ENCODE measurements at regions of chr1 and their contacts with region 1.

Region 1: GRCh38 chr1:64163970-64164369 is 39.5 kb upstream of the UBE2U start:
- DNase-seq: no peak

Region 2: DNA sequence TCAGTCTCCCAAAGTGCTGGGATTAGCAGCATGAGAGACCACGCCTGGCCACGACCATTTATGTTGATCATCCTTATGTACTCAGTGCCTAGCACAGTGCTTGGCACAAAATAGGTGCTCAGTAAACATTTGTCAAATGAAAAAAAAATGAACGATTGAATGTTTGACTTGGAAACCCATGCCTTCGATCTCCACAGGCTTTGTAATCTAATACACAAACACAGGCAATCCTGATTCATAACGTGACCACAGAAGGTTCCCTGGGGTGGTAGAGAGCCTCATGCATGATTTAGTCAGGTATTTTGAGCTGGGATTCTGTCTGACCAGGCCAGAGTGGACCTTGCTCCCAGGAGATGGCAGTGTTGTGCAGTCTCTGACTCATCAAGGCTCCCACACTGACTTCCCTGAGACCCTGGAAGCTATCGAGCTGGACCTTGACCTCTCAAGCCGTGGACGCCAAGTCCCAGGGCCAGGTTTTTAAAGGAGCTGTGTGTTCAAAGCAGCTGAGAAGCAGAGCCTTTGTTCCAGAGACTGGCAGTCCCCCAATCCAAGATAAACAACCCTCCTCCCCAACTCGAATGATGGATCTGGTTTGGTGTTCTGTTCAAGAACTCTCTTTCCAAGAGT is 489.6 kb before region 1 on chr1:
- intact Hi-C with region 1: loop called (anchors 10 kb)
- DNase-seq: no peak

Region 3: DNA sequence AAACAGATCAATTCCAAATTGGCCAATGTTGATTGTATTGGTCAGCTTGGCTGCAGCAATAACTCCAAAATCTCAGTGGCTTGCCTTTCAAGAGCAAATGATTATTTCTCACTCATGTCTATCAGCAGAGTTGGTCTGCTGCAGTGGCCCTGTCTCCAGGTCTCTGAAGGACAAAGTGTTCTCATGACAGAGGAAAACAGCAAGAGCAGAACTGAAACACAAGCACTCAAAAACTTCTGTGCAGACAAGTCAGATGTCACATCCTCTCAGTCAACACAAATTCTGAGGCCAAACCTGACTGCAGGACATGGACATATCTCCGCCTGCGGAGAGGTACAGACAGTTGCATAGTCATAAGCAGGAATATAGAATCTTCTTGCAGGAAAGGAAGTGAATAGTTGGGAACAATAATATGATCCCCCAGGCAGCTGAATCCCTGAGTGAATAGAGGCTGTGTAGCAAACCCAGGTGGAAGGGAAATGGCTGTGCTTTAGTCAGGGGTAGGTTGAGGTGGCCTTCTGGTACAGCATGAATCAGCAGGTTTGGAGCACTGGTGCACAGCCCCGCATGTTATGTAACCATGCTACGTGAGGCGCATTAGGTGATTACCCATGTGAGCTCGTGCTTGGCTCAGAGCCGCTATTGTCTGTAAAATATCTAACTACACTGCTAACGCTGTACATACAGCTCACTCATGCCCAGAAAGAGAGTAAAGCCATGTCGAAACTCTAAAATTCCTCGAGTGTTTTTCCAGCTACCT is 22.3 kb after region 1 on chr1:
- intact Hi-C with region 1: no loop called
- DNase-seq: no peak

Measured in cardiac septum (tissue), 1 donor.